MCF 10A (cell line): ENCODE measurements at regions of chr5 and their contacts with region 1.

Region 1: DNA sequence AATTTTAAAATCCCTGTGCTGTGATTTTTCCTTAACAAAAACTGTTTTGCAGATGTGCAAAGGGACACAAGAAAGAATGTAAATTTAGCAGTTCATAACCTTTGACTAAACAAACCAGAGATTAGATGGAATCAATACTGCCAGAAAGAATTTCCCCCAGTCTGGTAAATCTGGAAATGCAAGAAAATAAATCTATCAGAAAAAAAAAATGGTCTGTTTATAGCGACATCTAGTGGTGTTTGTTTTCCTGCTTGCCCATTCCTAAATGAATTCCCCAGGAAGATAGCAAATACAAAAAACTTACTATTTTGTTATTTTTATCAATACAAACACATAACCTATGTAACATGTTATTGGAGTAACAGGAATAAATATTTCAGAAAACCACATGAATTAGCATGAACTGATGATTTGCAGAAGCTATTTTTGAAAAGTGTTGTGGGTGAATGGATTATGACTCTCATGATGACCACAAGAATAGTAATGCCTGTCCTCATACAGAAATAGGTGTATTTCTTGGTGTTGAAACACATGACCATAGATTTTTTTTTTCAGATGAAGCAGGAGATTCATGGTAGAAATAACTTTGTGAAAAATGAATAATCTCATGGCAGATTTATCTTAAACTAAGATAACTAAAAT is 1703.8 kb downstream of the MAT2B start:
- DNase-seq: peak; percentile 55
- H3K4me3 Mint-ChIP-seq: no peak overlapping the region
- H3K27ac Mint-ChIP-seq: no peak overlapping the region
- H3K4me1 Mint-ChIP-seq: no peaks in the 10 kb centered on the region
- H3K27me3 Mint-ChIP-seq: no peaks in the 10 kb centered on the region
- CTCF ChIP-seq: peak; percentile 66

Region 2: DNA sequence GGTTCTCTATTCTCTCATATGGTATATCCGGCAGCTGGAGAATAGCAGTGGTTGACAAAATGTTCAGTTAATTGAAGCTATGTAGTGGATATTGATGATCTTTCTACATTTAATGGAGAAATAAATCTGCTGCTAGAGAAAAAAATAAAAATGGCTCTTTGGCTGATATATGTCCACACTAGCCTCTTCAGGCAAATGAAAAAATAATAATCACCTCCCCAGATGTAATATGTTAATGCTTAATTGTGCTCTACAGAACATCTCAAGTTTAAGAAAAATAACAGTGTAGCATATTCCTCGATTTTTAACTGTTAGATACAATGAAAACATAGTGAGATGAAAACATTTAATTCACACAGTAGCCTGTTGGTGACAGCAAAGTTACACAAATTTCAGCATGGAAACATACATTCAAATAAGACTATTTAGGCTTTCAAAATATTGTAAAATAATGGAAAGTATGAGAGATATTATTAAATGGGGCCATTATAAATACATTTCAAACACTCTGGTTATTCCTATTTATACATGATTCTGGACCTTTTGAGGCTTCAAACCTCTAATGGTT is 1160.8 kb before region 1 on chr5:
- CTCF ChIA-PET with region 1: interaction called, 3 read pairs
- POLR2A ChIA-PET with region 1: no interaction called
- intact Hi-C with region 1: loop called (anchors 1 kb)
- DNase-seq: peak; percentile 45
- H3K4me3 Mint-ChIP-seq: no peak overlapping the region
- H3K27ac Mint-ChIP-seq: no peak overlapping the region
- H3K4me1 Mint-ChIP-seq: no peaks in the 10 kb centered on the region
- H3K27me3 Mint-ChIP-seq: no peaks in the 10 kb centered on the region
- CTCF ChIP-seq: peak; percentile 61

Region 3: DNA sequence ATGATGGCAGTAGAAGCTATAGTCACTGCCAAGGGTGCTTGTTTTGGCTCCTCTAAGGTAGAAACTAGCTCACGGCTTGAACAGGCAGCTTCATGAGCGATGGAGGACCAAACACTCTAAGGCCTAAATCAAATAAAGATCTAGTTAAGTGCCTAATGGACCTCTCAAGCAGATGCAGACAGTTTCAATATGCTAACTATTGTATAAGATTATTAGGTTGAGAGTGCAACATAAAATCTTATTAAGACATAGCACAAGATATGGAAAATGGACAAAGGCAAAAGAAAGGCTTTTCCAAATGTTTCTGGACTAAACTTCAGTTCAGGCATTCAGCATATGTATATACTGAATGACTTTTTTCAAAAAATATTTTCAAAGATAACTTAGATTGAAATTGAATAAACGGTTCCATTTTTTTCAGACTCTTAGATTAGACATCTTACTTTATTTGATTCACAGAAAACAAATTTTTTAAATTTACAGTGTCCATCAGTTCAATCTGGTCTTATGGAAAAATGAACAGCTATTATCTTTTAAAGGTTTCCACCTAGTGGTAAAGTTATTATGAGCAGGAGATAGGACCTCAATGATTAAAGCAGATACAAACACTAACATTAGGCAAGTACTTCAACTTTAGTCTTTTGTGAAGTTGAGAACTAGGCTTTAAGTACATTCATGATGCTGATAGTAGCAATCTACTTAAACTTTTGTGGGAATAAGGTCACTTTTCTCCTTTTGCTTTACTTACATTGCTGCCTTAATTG is 536.1 kb before region 1 on chr5:
- CTCF ChIA-PET with region 1: interaction called, 6 read pairs
- POLR2A ChIA-PET with region 1: no interaction called
- intact Hi-C with region 1: loop called (anchors 5 kb)
- DNase-seq: peak; percentile 42
- H3K4me3 Mint-ChIP-seq: no peak overlapping the region
- H3K27ac Mint-ChIP-seq: no peak overlapping the region
- H3K4me1 Mint-ChIP-seq: no peaks in the 10 kb centered on the region
- H3K27me3 Mint-ChIP-seq: no peaks in the 10 kb centered on the region
- CTCF ChIP-seq: peak; percentile 54

Region 4: GRCh38 chr5:164958688-164959087 is 250.5 kb before region 1 on chr5:
- CTCF ChIA-PET with region 1: interaction called, 6 read pairs
- POLR2A ChIA-PET with region 1: no interaction called
- intact Hi-C with region 1: loop called (anchors 5 kb)
- DNase-seq: peak; percentile 14
- H3K4me3 Mint-ChIP-seq: no peak overlapping the region
- H3K27ac Mint-ChIP-seq: no peak overlapping the region
- H3K4me1 Mint-ChIP-seq: no peaks in the 10 kb centered on the region
- H3K27me3 Mint-ChIP-seq: no peaks in the 10 kb centered on the region
- CTCF ChIP-seq: no peak

Region 5: GRCh38 chr5:165108809-165109208 is 100.4 kb before region 1 on chr5:
- CTCF ChIA-PET with region 1: no interaction called
- POLR2A ChIA-PET with region 1: no interaction called
- intact Hi-C with region 1: no loop called
- DNase-seq: no peak
- H3K4me3 Mint-ChIP-seq: no peak overlapping the region
- H3K27ac Mint-ChIP-seq: no peak overlapping the region
- H3K4me1 Mint-ChIP-seq: peaks cover 6% of the 10 kb centered on the region
- H3K27me3 Mint-ChIP-seq: no peaks in the 10 kb centered on the region
- CTCF ChIP-seq: no peak

Region 6: DNA sequence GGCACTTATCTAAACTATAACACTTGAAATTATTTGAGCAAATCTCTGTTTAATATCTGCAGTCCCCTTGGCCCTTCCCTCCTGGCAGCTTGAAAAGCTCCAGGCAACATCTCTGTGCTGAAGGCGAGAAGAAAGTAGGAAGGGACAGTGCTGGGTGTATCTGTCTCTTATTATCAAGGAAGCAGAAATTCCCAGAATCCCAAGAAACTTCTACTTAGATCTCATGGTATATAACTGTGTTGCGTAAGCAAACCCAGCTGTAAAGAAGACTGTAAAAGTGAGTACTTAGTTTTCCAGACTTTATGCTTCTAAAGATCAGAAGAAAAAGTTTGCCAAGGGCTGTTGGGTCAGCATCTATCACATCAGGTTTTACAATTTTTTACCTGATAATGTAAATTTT is 166.0 kb after region 1 on chr5:
- CTCF ChIA-PET with region 1: no interaction called
- POLR2A ChIA-PET with region 1: no interaction called
- intact Hi-C with region 1: no loop called
- DNase-seq: no peak
- H3K4me3 Mint-ChIP-seq: no peak overlapping the region
- H3K27ac Mint-ChIP-seq: no peak overlapping the region
- H3K4me1 Mint-ChIP-seq: no peaks in the 10 kb centered on the region
- H3K27me3 Mint-ChIP-seq: no peaks in the 10 kb centered on the region
- CTCF ChIP-seq: no peak

Region 7: DNA sequence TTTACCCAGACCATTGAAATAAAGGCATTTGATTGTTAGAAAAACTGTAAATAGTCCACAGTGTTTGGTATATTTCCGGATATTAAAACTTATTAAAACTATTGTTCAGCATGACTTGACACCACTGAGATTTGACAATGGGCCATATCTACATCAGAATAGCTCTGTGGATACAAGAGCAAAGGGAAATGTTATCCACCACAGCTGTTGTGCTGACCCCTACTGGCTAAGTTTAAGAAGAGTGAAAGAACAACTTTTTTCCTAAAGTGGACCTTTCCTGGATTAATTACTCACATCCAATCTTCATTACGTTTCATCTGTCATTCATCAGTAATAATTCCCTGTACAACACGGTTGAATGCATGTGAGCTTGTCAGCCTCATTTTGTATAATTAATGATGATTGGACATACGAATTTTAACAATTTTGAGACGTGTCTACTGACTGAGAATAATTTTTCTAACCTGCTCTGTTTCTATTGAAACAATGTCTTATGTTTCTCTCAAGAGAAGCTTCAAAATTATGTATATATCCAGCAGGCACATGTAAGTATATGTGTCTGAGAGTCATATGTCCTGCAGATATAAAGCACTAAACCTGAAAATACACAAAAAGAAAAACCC is 248.8 kb after region 1 on chr5:
- CTCF ChIA-PET with region 1: no interaction called
- POLR2A ChIA-PET with region 1: no interaction called
- intact Hi-C with region 1: loop called (anchors 5 kb)
- DNase-seq: peak; percentile 79
- H3K4me3 Mint-ChIP-seq: no peak overlapping the region
- H3K27ac Mint-ChIP-seq: no peak overlapping the region
- H3K4me1 Mint-ChIP-seq: peaks cover 11% of the 10 kb centered on the region
- H3K27me3 Mint-ChIP-seq: no peaks in the 10 kb centered on the region
- CTCF ChIP-seq: peak; percentile 80